Ovary (tissue), 10 donors: ENCODE measurements at regions of chr6 and their contacts with region 1.

Region 1: GRCh38 chr6:90478789-90479602 is 107.9 kb downstream of the MAP3K7 start:
- DNase-seq: peak; percentile 84 to 93 (median 86)
- H3K4me3 ChIP-seq: no peak overlapping the region
- H3K27ac ChIP-seq: no peak overlapping the region
- H3K4me1 ChIP-seq: no peaks in the 10 kb centered on the region
- H3K27me3 ChIP-seq: no peaks in the 10 kb centered on the region
- CTCF ChIP-seq: peak; percentile 84 to 95 (median 90)
- EP300 ChIP-seq: no peak
- POLR2A ChIP-seq: no peak

Region 2: GRCh38 chr6:89934685-89935366 is 544.2 kb before region 1 on chr6:
- intact Hi-C with region 1: loop called (anchors 2 to 5 kb)
- DNase-seq: no peak
- H3K4me3 ChIP-seq: no peak overlapping the region
- H3K27ac ChIP-seq: no peak overlapping the region
- H3K4me1 ChIP-seq: no peaks in the 10 kb centered on the region
- H3K27me3 ChIP-seq: no peaks in the 10 kb centered on the region
- CTCF ChIP-seq: no peak
- EP300 ChIP-seq: no peak
- POLR2A ChIP-seq: no peak

Region 3: GRCh38 chr6:89940225-89941027 is 538.6 kb before region 1 on chr6:
- intact Hi-C with region 1: loop called (anchors 2 to 5 kb)
- DNase-seq: peak; percentile 67 to 82 (median 75)
- H3K4me3 ChIP-seq: no peak overlapping the region
- H3K27ac ChIP-seq: no peak overlapping the region
- H3K4me1 ChIP-seq: peaks cover 4% of the 10 kb centered on the region
- H3K27me3 ChIP-seq: no peaks in the 10 kb centered on the region
- CTCF ChIP-seq: peak; percentile 28 to 84 (median 75)
- EP300 ChIP-seq: no peak
- POLR2A ChIP-seq: no peak

Region 4: GRCh38 chr6:90296346-90297114 is 182.5 kb before region 1 on chr6 and contains the start of gene BACH2:
- intact Hi-C with region 1: loop called in 2 of 4 experiments (anchors 10 kb)
- DNase-seq: peak; percentile 93 to 96 (median 96)
- H3K4me3 ChIP-seq: peak within 1 kb of the TSS; percentile 58
- H3K27ac ChIP-seq: peak within 1 kb of the TSS; percentile 94 to 97
- H3K4me1 ChIP-seq: peaks cover 4% of the 10 kb centered on the region
- H3K27me3 ChIP-seq: no peaks in the 10 kb centered on the region
- CTCF ChIP-seq: peak in 1 of 3 donors; percentile 23
- EP300 ChIP-seq: no peak
- POLR2A ChIP-seq: peak; percentile 60
- total RNA-seq, gene BACH2: 7.4 to 19.2 (median 16.1) TPM

Region 5: DNA sequence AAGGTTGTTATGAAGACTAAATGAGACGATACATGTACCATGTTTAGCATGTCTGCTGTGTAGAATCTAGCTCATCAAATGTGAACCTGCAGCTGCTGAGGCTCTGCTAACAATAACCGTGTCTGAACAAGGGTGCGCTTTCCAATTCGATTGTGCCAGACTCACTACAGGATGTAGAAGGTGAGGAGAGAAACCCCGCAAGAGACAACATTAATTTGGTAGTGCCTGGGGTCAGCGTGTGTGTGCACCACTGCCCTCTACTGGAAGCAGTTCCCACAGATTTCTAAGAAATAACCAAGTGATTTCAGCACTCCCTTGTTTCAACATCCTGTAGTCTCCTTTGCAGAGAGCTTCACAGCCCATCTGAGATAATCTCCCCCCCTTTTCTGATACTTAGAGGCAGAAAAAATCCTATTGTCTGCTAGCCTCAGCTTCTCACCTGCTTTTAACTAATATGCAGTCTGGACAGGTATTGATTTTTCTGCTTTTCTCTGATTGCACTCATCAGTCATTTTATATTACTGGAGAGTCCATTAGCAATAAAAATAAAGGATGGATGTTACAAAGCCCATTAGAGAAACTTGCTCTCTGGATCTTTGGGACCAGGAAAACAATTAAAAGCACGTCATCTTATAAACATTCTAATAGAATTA is 85.6 kb before region 1 on chr6:
- intact Hi-C with region 1: loop called in 1 of 4 experiments (anchors 10 kb)
- DNase-seq: peak; percentile 49 to 73 (median 62)
- H3K4me3 ChIP-seq: no peak overlapping the region
- H3K27ac ChIP-seq: no peak overlapping the region
- H3K4me1 ChIP-seq: peaks cover 1% of the 10 kb centered on the region
- H3K27me3 ChIP-seq: no peaks in the 10 kb centered on the region
- CTCF ChIP-seq: peak; percentile 62 to 79 (median 74)
- EP300 ChIP-seq: no peak
- POLR2A ChIP-seq: no peak

Region 6: GRCh38 chr6:90403489-90404381 is 75.3 kb before region 1 on chr6:
- intact Hi-C with region 1: loop called in 2 of 4 experiments (anchors 10 kb)
- DNase-seq: peak; percentile 45 to 77 (median 67)
- H3K4me3 ChIP-seq: no peak overlapping the region
- H3K27ac ChIP-seq: no peak overlapping the region
- H3K4me1 ChIP-seq: no peaks in the 10 kb centered on the region
- H3K27me3 ChIP-seq: no peaks in the 10 kb centered on the region
- CTCF ChIP-seq: no peak
- EP300 ChIP-seq: no peak
- POLR2A ChIP-seq: no peak

Region 7: DNA sequence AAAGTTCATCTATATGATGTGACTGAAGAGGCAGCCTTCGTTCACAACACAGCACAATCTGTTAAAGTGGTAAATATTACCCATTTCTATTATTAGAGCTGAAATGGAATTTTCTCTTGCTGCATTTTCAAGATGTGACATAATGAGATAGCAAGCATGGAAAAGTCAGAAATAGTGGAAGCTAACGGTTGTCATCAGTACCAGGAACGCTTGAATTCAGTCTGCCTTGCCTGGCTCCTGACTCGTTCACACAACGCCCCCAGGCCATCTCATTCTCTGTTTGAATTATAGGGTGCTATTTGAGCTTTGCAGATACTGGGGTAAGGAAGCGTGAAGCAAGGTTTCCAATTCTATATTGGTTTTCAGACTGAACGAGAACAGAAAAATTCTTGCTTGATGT is 224.3 kb after region 1 on chr6:
- intact Hi-C with region 1: no loop called
- DNase-seq: no peak
- H3K4me3 ChIP-seq: no peak overlapping the region
- H3K27ac ChIP-seq: no peak overlapping the region
- H3K4me1 ChIP-seq: no peaks in the 10 kb centered on the region
- H3K27me3 ChIP-seq: no peaks in the 10 kb centered on the region
- CTCF ChIP-seq: no peak
- EP300 ChIP-seq: no peak
- POLR2A ChIP-seq: no peak